RWPE1 (cell line): ENCODE measurements at regions of chr3 and their contacts with region 1.

Region 1: DNA sequence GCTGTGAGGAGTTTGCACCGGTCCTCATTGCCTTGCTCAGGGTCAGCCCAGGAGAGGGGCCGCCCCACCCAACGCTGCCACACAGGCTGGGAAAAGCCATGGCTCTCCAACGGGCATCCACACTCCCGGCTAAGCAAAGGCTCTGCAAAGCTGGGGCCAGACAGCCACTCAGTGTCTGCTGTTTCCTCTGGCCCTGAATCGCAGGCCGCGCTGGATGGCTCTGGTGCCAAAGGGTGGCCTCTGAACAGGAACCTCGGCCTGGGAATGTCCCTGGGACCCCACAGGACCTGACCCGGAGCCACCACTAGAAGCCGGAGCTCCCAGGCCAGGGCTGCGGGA is 42.9 kb downstream of the RPN1 start:
- DNase-seq: no peak
- H3K27ac ChIP-seq: no peak overlapping the region
- CTCF ChIP-seq: no peak

Region 2: DNA sequence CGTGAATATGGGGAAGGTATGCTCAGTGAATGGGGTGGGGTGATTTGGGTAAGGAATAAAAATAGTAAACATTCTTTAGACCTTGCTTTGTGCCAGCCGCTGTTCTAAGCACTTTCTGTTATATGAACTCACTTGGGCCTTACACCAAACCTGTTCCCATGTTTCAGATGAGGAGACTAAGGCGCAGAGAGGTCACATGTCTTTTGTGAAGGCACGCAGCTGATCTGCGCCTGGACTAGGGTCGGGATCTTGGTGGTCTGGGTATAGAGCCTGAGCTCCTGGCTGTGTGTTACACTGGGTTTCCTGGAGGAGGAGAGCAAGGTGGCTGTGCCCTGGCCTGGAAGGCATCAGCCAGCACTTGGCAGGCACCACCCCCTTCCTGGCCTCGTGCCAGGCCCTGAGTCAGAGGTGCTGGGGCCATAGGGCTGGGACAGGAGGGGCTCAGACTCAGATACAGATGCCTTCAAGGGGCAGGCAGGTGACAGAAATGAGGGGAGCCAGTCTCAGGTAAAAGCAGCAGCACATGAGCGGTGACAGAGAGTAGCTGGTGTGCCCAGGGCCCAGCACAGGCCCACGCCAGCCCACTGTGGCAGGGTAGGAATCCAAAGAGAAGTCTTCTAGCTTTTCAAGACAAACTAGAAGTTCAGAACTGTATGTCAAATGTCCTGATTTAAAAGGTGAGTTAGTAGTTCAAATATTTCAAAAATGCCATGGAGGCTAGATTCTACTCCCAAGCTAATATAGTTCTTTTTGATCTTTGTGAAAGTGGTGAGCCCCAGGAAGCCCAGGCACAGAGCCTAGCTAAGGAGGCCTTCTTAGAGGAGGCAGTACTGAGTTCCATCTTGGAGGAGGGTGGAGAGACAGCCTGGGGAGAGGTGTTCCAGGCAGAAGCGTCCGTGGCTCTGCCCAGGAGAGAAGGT is 224.1 kb before region 1 on chr3:
- CTCF ChIA-PET with region 1: no interaction called
- POLR2A ChIA-PET with region 1: no interaction called
- DNase-seq: peak; percentile 86
- H3K27ac ChIP-seq: peak overlapping the region; percentile 46
- CTCF ChIP-seq: no peak

Region 3: DNA sequence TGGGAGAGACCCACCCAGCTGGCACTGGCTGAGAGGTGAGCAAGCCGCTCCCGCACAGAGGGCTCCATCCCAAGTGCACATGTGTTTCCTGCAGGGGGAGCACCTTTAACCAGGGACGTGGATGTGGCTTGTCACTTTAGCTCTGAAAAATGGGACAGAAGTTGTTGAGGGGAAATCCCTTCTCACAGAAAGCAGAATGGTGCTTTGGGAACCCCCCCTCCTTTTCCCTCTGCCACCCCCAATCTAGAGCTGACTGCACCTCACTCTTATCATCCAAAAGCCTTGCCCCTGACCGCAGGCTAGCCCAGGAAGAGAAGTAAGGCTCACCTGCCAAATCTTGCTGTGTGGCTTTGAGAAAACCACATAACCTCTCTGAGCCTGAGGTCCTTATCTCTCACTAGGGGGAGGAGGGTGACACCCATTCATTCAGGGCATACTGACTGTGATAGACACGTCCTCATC is 35.0 kb before region 1 on chr3:
- CTCF ChIA-PET with region 1: interaction called, 12 read pairs
- POLR2A ChIA-PET with region 1: no interaction called
- DNase-seq: no peak
- H3K27ac ChIP-seq: no peak overlapping the region
- CTCF ChIP-seq: no peak; the same call in 1 of the 2 replicates

Region 4: GRCh38 chr3:128617557-128618397 is 10.1 kb after region 1 on chr3:
- CTCF ChIA-PET with region 1: interaction called, 11 read pairs
- POLR2A ChIA-PET with region 1: no interaction called
- DNase-seq: peak; percentile 99
- H3K27ac ChIP-seq: peak overlapping the region; percentile 84
- CTCF ChIP-seq: peak; percentile 98